CD14-positive monocyte (primary cell): ENCODE measurements at regions of chr1 and their contacts with region 1.

Region 1: GRCh38 chr1:65687428-65688214 is 105.1 kb upstream of the PDE4B start:
- DNase-seq: peak; percentile 57 to 67 (median 60)
- H3K4me3 ChIP-seq: no peak overlapping the region
- H3K4me3 Mint-ChIP-seq: no peak overlapping the region
- H3K27ac ChIP-seq: no peak overlapping the region
- H3K27ac Mint-ChIP-seq: no peak overlapping the region
- H3K4me1 ChIP-seq: peaks cover 22 to 24% of the 10 kb centered on the region in 2 donors
- H3K4me1 Mint-ChIP-seq: peaks cover 3% of the 10 kb centered on the region
- H3K27me3 ChIP-seq: no peaks in the 10 kb centered on the region
- H3K27me3 Mint-ChIP-seq: peaks cover 0 to 1% (median 0%) of the 10 kb centered on the region in 3 donors
- CTCF ChIP-seq: peak; percentile 98

Region 2: DNA sequence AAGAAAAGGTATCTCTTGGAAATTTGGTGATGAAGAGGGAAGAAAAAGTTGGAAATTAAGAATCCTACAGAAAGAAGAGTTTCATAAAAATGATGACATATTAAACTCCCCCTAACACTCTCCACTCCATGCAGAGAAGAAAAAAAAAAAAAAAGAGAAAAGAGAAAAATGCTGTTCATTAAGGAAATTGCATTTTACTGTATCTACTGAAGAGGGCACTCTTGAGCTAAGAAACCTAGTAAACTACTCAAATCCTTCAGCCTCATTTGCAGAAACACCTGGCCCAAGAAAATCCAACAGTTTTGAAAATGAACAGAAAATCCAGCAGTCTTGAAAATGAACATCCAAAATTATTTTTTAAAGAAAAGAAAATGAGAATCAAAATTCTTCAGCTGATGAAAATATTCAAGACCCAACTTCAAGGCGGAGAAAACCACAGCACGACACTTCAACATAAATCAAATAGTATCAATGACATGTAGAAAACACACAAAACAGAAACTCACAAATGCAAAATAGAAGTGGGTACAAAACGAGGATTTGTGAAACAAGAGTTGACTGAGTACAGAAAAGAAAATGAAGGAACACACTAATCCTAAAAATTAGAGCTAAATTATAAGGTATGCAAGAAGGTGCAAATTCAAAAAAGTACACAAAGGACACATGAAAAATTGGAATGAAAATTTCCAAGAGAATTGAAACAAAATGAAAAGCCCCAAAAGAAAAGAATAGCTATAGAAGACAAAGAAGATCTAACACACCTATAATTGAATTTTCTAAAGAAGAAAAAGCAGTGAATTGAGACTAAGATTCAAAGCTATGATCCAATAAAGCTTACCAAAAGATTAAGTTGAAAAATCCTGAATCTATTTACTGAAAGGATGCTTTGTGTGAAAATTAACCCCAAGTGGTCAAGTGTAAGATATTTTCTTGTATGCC is 451.5 kb before region 1 on chr1:
- intact Hi-C with region 1: loop called (anchors 5 to 10 kb)
- DNase-seq: peak; percentile 27 to 62 (median 46)
- H3K4me3 ChIP-seq: no peak overlapping the region
- H3K4me3 Mint-ChIP-seq: no peak overlapping the region
- H3K27ac ChIP-seq: no peak overlapping the region
- H3K27ac Mint-ChIP-seq: no peak overlapping the region
- H3K4me1 ChIP-seq: no peaks in the 10 kb centered on the region
- H3K4me1 Mint-ChIP-seq: peaks cover 4% of the 10 kb centered on the region
- H3K27me3 ChIP-seq: no peaks in the 10 kb centered on the region
- H3K27me3 Mint-ChIP-seq: peaks cover 0 to 2% (median 0%) of the 10 kb centered on the region in 3 donors
- CTCF ChIP-seq: peak; percentile 85

Region 3: GRCh38 chr1:65623895-65624294 is 63.7 kb before region 1 on chr1:
- intact Hi-C with region 1: no loop called
- DNase-seq: no peak
- H3K4me3 ChIP-seq: no peak overlapping the region
- H3K4me3 Mint-ChIP-seq: no peak overlapping the region
- H3K27ac ChIP-seq: no peak overlapping the region
- H3K27ac Mint-ChIP-seq: no peak overlapping the region
- H3K4me1 ChIP-seq: no peaks in the 10 kb centered on the region
- H3K4me1 Mint-ChIP-seq: no peaks in the 10 kb centered on the region
- H3K27me3 ChIP-seq: no peaks in the 10 kb centered on the region
- H3K27me3 Mint-ChIP-seq: peaks cover 0 to 2% (median 0%) of the 10 kb centered on the region in 3 donors
- CTCF ChIP-seq: no peak

Region 4: GRCh38 chr1:66207484-66207883 is 519.9 kb after region 1 on chr1:
- intact Hi-C with region 1: no loop called
- DNase-seq: no peak
- H3K4me3 ChIP-seq: no peak overlapping the region
- H3K4me3 Mint-ChIP-seq: no peak overlapping the region
- H3K27ac ChIP-seq: no peak overlapping the region
- H3K27ac Mint-ChIP-seq: no peak overlapping the region
- H3K4me1 ChIP-seq: no peaks in the 10 kb centered on the region
- H3K4me1 Mint-ChIP-seq: no peaks in the 10 kb centered on the region
- H3K27me3 ChIP-seq: no peaks in the 10 kb centered on the region
- H3K27me3 Mint-ChIP-seq: no peaks in the 10 kb centered on the region
- CTCF ChIP-seq: no peak